ENCODE measurements at regions of chr3 and their contacts with region 1.

Region 1: GRCh38 chr3:56988458-56989168 is 71.9 kb upstream of the SPATA12 start:
- DNase-seq: peak; percentile 83
- ATAC-seq: peak; percentile 67
- H3K4me3 Mint-ChIP-seq: no peak overlapping the region
- H3K27ac Mint-ChIP-seq: no peak overlapping the region
- H3K4me1 Mint-ChIP-seq: peaks cover 35% of the 10 kb centered on the region
- H3K27me3 Mint-ChIP-seq: peaks cover 20% of the 10 kb centered on the region

Region 2: GRCh38 chr3:56702490-56703315 is 285.9 kb before region 1 on chr3:
- CTCF ChIA-PET with region 1: interaction called, 222 read pairs
- POLR2A ChIA-PET with region 1: interaction called, 9 read pairs
- DNase-seq: peak; percentile 74
- ATAC-seq: peak; percentile 73
- H3K4me3 Mint-ChIP-seq: no peak overlapping the region
- H3K27ac Mint-ChIP-seq: no peak overlapping the region
- H3K4me1 Mint-ChIP-seq: peaks cover 34% of the 10 kb centered on the region
- H3K27me3 Mint-ChIP-seq: no peaks in the 10 kb centered on the region

Region 3: DNA sequence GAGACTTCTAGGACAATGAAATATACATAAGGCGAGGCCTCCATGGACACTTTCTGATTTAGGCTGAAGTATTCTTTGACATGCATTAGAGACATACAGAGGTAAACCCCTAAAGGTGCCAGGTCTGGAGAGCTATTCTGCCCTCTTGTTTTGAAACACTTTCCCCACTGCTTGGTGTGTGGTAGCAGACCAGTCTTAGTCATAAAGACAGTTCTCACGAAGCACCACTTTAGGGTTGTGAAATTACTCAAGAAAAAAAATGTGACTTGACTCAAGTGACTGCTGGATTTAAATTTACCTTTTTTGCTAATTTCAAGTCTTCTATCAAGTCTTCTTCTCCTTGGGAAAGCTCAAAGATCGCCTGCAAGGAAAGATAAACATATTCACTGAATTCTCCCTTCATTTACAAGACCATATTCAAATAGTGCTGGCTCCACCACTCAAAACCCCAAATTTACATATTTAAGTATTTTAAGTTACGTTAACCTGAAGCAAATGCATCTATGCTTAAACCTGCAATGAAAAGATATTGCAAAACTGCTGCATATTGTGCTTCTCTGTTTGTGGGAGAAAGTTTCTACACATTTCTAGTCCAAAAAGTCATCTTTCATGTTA is 235.3 kb before region 1 on chr3:
- CTCF ChIA-PET with region 1: interaction called, 15 read pairs
- POLR2A ChIA-PET with region 1: no interaction called
- DNase-seq: peak; percentile 62
- ATAC-seq: peak; percentile 71
- H3K4me3 Mint-ChIP-seq: peak overlapping the region; percentile 48
- H3K27ac Mint-ChIP-seq: peak overlapping the region; percentile 79
- H3K4me1 Mint-ChIP-seq: peaks cover 73% of the 10 kb centered on the region
- H3K27me3 Mint-ChIP-seq: no peaks in the 10 kb centered on the region

Region 4: GRCh38 chr3:56812754-56813650 is 175.6 kb before region 1 on chr3:
- CTCF ChIA-PET with region 1: interaction called, 196 read pairs
- POLR2A ChIA-PET with region 1: no interaction called
- DNase-seq: no peak
- ATAC-seq: no peak
- H3K4me3 Mint-ChIP-seq: peak overlapping the region; percentile 2
- H3K27ac Mint-ChIP-seq: peak overlapping the region; percentile 40
- H3K4me1 Mint-ChIP-seq: peaks cover 48% of the 10 kb centered on the region
- H3K27me3 Mint-ChIP-seq: no peaks in the 10 kb centered on the region

Region 5: DNA sequence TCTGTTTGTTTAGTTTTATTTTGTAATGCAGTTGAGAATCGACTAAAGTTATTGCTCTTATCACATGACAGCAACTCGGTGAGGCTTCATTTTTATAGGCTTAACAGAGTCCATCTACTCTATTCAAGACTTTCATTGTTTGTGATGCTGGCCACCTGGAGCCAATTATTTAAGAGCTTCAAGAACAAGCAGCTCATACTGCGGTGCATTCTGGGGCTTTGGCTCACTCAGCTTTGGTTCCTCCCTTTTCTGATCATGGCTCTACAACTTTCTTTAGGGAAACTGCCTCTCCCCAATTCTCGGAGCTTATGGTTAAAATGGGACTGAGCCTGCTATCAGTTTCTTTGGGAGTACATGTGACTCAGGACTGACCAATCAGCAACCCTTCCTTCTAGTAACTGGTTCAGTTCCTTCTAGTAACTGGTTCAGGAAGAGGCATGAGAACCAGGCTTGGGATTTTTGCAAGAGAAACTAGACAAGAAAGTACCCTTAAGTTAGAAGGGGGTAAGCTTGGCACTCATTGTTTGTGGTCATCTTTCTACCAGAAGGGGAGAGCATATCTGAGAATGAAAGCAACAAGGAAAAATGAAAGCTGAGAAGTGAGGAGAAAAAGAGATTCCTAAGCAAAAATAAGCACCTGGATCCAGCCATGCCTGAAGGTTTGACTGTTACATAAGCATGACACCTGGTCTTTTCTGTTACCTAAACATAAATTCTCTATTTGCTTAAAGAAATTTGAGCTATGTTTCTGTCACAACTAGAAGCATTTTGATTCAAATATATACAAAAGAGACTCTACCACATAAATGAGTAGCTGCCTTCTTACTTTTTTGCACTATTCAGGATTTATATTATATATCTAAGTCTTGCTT is 162.8 kb before region 1 on chr3:
- CTCF ChIA-PET with region 1: interaction called, 14 read pairs
- POLR2A ChIA-PET with region 1: no interaction called
- DNase-seq: no peak
- ATAC-seq: no peak
- H3K4me3 Mint-ChIP-seq: no peak overlapping the region
- H3K27ac Mint-ChIP-seq: no peak overlapping the region
- H3K4me1 Mint-ChIP-seq: peaks cover 47% of the 10 kb centered on the region
- H3K27me3 Mint-ChIP-seq: no peaks in the 10 kb centered on the region

Region 6: DNA sequence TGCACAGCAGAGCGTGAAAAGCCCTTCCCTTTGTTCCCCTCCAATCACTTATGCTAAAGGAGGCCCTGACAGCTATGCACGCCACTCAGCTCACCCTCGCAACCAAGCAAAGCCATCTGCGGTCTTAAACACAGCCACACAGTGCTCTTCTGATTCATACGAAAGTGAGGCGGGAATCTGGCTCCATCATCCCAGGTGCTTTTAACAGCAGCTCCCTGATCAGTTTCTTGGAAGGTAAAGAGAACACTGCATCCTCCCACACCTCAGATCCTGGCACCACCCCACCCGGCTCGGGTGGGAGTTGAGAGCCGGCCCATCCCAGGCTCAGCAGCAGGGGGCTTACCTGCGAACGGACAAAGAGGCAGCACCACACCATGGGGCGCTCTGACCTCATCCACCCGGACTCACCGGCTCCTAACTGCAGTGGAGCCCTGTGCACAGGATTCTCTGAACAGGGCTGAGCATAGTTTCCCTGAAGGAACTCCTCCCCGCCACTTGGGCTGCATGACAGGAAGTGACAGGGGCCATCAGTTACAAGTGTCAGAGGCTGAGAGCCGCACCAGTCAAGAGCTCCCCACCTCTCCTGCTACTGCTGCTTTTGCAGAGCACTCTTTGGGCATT is 72.5 kb before region 1 on chr3:
- CTCF ChIA-PET with region 1: interaction called, 57 read pairs
- POLR2A ChIA-PET with region 1: interaction called, 3 read pairs
- DNase-seq: peak; percentile 90
- ATAC-seq: peak; percentile 93
- H3K4me3 Mint-ChIP-seq: peak overlapping the region; percentile 92
- H3K27ac Mint-ChIP-seq: peak overlapping the region; percentile 99
- H3K4me1 Mint-ChIP-seq: peaks cover 63% of the 10 kb centered on the region
- H3K27me3 Mint-ChIP-seq: no peaks in the 10 kb centered on the region

Region 7: GRCh38 chr3:57007513-57008460 is 19.2 kb after region 1 on chr3:
- CTCF ChIA-PET with region 1: interaction called, 23 read pairs
- POLR2A ChIA-PET with region 1: no interaction called
- DNase-seq: peak; percentile 39
- ATAC-seq: peak; percentile 89
- H3K4me3 Mint-ChIP-seq: peak overlapping the region; percentile 6
- H3K27ac Mint-ChIP-seq: peak overlapping the region; percentile 77
- H3K4me1 Mint-ChIP-seq: peaks cover 14% of the 10 kb centered on the region
- H3K27me3 Mint-ChIP-seq: peaks cover 2% of the 10 kb centered on the region